H1 (cell line): ENCODE measurements at regions of chr1 and their contacts with region 1.

Region 1: DNA sequence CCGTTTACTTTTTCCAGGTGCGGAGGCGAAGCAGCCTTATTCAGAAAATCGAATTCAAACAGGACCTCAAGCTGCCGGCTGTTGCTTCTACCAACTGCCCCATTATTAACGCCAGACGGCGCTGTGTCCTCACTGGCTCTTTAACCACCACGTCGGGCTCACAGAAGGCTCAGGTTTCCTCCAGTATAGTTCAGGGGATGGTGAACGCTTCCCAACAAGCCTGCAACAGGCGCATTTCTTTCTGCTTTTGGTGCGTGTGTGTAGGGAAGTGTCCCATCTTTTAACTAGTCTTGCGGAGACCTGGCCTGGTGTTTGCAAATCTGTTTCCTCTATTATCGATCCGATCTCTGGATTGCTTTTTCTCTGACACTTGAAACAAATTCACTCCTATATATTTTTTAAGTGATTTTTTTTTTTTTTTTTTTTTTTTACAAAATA is 791 bp upstream of the STUM start:
- DNase-seq: peak; percentile 80 to 81
- H3K4me3 ChIP-seq: peak overlapping the region in 2 of 4 experiments; percentile 13 to 62; a peak in 5 of 8 replicates
- H3K27ac ChIP-seq: no peak overlapping the region
- H3K4me1 ChIP-seq: peaks cover 3 to 24% (median 14%) of the 10 kb centered on the region in 4 experiments
- H3K27me3 ChIP-seq: peaks cover 10 to 50% (median 46%) of the 10 kb centered on the region in 4 experiments
- CTCF ChIP-seq: peak; percentile 85 to 96 (median 93)
- EP300 ChIP-seq: peak in 1 of 2 experiments; percentile 29; a peak in 1 of 3 replicates
- POLR2A ChIP-seq: no peak
- RAD21 ChIP-seq: peak; percentile 85 to 92

Region 2: DNA sequence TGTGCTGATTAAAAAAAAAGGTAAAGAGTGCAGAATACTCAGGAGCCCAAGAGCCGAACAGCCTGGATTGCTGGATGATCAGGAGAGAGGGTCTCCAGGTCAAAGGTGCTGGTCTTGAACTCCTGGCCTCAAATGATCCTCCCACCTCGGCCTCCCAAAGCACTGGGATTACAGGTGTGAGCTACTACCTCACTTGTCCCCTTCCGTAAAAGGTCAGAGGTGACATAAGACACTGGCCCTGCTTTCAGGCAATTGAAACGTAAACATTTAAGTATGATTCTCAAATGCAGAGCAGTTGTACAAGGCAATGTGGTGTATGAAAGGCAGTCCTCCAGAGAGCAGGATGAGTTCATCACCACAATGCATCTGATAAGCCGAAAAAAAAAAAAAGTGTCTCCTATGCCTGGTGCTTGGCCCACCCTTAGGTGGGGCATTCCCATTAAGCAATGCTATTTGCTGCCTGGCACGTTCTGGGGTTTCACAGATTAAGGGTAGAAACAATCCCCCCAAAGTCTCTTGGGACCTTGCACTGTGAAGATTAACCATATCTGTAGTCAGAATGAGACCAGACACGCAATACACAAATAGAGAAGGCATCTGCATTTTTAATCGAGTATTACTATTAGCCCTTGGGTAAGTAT is 187.5 kb before region 1 on chr1:
- CTCF ChIA-PET with region 1: no interaction called
- POLR2A ChIA-PET with region 1: no interaction called
- DNase-seq: no peak
- H3K4me3 ChIP-seq: no peak overlapping the region
- H3K27ac ChIP-seq: no peak overlapping the region
- H3K4me1 ChIP-seq: no peaks in the 10 kb centered on the region
- H3K27me3 ChIP-seq: no peaks in the 10 kb centered on the region
- CTCF ChIP-seq: no peak
- EP300 ChIP-seq: no peak
- POLR2A ChIP-seq: no peak
- RAD21 ChIP-seq: no peak

Region 3: GRCh38 chr1:226519716-226520598 is 27.8 kb before region 1 on chr1:
- CTCF ChIA-PET with region 1: interaction called, 34 read pairs
- POLR2A ChIA-PET with region 1: interaction called, 3 read pairs
- DNase-seq: no peak
- H3K4me3 ChIP-seq: peak overlapping the region in 3 of 4 experiments; percentile 26 to 30 (median 30); a peak in 4 of 8 replicates
- H3K27ac ChIP-seq: no peak overlapping the region
- H3K4me1 ChIP-seq: peaks cover 6 to 22% (median 9%) of the 10 kb centered on the region in 4 experiments
- H3K27me3 ChIP-seq: peaks cover 0 to 3% (median 0%) of the 10 kb centered on the region in 4 experiments; a peak in 2 of 7 replicates
- CTCF ChIP-seq: peak; percentile 51 to 76 (median 76)
- EP300 ChIP-seq: no peak
- POLR2A ChIP-seq: no peak
- RAD21 ChIP-seq: peak; percentile 39 to 65; a peak in 3 of 4 replicates

Region 4: DNA sequence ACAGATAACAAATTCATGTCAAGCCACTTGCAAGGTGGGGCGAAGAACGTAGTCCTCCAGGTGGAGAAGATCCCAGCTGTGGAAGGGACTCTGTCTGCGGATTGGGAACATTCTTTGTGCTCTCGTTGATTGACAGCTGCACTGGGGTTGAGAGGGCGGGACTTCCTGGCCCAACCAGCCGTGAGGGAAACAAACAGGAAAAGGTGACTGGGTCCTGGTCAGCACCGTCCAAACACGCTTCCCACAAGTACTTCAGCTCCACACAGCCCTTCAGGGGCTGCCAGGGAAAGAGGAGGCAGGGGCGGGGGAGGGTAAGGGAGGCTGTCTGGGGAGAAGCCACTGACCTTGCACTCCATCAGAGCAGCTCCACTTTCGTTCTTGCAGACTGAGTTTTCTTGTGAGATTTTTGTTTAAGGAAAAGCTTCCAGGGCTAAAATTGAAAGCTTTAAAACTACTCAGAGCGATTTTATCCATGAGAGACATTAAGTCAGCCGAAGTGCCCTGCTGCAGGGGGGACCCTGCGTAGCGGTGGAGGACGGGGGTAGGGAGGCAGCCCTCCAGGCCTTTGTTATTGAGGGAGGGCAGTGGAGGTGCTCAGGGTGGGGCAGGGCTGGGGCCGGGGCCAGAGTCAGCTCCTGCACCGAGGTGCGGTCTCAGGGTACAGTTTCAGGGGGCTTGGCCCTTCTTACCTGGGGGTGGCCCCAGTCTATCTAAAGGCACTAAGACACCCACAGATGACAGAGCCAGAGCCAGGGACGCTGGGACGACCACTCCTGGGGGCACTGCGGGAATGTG is 20.8 kb before region 1 on chr1:
- CTCF ChIA-PET with region 1: interaction called, 71 read pairs
- POLR2A ChIA-PET with region 1: no interaction called
- DNase-seq: peak in 1 of 2 experiments; percentile 73
- H3K4me3 ChIP-seq: no peak overlapping the region
- H3K27ac ChIP-seq: no peak overlapping the region
- H3K4me1 ChIP-seq: peaks cover 0 to 3% (median 0%) of the 10 kb centered on the region in 4 experiments; a peak in 1 of 7 replicates
- H3K27me3 ChIP-seq: no peaks in the 10 kb centered on the region; a peak in 1 of 7 replicates
- CTCF ChIP-seq: no peak
- EP300 ChIP-seq: no peak
- POLR2A ChIP-seq: no peak
- RAD21 ChIP-seq: no peak

Region 5: GRCh38 chr1:226532553-226532952 is 15.2 kb before region 1 on chr1:
- CTCF ChIA-PET with region 1: interaction called, 71 read pairs
- POLR2A ChIA-PET with region 1: interaction called, 4 read pairs
- DNase-seq: no peak
- H3K4me3 ChIP-seq: no peak overlapping the region
- H3K27ac ChIP-seq: no peak overlapping the region
- H3K4me1 ChIP-seq: no peaks in the 10 kb centered on the region; a peak in 1 of 7 replicates
- H3K27me3 ChIP-seq: no peaks in the 10 kb centered on the region; a peak in 1 of 7 replicates
- CTCF ChIP-seq: no peak
- EP300 ChIP-seq: no peak
- POLR2A ChIP-seq: no peak
- RAD21 ChIP-seq: no peak

Region 6: DNA sequence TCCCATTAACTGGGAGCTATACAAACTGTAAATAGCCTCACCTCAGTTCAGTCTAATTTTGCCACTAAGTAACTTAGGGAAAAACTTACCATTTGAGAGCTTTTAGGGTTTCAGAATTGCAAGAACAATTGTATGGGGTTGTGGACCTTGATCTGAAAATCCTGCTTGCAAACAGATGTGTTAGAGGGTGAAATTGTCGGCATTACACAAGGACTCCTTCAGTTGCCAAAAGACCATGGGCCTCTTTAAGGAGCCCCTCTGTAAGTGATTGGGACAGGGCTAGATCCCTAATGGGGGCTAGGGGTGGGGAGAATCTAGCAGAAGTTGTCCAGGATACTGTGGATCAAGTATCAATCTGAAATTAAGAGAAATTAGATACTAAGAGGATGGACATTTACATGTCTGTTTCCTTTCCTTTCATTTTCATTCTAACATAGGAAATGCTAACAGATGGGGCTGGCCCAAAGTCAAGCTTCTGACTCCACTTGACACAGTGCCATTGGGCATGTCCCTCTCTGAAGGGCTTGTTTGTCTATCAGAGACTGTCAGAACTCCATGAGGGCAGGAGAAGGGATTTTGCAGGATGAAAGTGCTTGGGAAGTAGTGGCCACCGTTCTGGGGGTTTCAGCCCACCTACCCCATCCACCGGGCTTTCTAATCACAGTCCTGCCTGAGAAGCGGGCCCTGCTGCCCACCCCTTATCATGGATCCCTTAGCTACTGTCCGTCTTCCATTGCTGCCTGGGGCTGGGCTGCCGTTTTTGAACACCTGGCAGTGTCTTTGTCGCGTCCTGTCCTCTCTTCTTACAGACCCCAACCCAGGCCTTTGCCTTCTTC is 55.5 kb after region 1 on chr1:
- CTCF ChIA-PET with region 1: interaction called, 49 read pairs
- POLR2A ChIA-PET with region 1: no interaction called
- DNase-seq: no peak
- H3K4me3 ChIP-seq: no peak overlapping the region
- H3K27ac ChIP-seq: no peak overlapping the region
- H3K4me1 ChIP-seq: peaks cover 0 to 27% (median 13%) of the 10 kb centered on the region in 4 experiments; a peak in 6 of 7 replicates
- H3K27me3 ChIP-seq: no peaks in the 10 kb centered on the region
- CTCF ChIP-seq: no peak
- EP300 ChIP-seq: no peak
- POLR2A ChIP-seq: no peak
- RAD21 ChIP-seq: no peak

Region 7: DNA sequence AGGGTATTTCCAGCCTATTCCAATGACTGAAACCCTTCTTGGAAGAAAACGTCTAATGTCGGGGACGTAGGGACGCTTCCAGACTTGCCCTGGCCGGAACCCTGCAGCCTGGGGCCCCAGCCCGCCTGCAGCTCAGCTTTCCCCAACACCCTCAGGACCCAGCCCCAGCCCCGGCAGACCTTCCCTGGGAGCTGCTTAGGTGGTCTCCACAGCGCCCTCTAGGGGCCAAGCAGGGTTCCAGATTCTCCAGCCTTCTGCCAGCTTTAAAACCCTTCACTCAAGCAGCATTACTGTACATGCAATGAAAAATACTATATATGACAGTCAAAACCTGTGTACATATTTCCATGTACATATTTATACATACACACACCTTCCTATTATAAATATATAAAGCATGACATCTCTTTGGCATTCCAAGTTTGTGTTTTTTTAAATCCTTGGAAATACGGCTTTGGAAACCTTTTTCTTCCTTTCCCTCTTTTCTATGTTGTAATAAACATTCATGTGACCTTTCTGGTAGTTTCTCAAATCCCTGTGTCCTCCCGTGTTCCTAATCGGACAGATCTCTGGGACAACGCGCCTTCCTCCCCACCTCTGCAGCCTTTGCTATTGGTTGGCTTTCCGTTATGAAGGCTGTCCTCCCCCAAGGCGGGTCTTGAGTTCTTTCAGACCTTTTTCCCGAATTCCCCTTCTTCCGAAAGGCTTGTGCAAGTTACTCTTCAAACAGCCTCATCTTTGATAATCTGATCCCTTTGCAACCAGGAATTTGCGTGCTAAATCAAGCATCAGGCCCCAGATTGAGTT is 61.1 kb after region 1 on chr1:
- CTCF ChIA-PET with region 1: interaction called, 49 read pairs
- POLR2A ChIA-PET with region 1: no interaction called
- DNase-seq: peak; percentile 70 to 88
- H3K4me3 ChIP-seq: no peak overlapping the region
- H3K27ac ChIP-seq: no peak overlapping the region
- H3K4me1 ChIP-seq: peaks cover 0 to 27% (median 16%) of the 10 kb centered on the region in 4 experiments; a peak in 6 of 7 replicates
- H3K27me3 ChIP-seq: no peaks in the 10 kb centered on the region
- CTCF ChIP-seq: peak; percentile 76 to 88 (median 84)
- EP300 ChIP-seq: no peak
- POLR2A ChIP-seq: no peak
- RAD21 ChIP-seq: peak; percentile 65 to 75